SK-N-SH (cell line): ENCODE measurements at regions of chr11 and their contacts with region 1.

Region 1: DNA sequence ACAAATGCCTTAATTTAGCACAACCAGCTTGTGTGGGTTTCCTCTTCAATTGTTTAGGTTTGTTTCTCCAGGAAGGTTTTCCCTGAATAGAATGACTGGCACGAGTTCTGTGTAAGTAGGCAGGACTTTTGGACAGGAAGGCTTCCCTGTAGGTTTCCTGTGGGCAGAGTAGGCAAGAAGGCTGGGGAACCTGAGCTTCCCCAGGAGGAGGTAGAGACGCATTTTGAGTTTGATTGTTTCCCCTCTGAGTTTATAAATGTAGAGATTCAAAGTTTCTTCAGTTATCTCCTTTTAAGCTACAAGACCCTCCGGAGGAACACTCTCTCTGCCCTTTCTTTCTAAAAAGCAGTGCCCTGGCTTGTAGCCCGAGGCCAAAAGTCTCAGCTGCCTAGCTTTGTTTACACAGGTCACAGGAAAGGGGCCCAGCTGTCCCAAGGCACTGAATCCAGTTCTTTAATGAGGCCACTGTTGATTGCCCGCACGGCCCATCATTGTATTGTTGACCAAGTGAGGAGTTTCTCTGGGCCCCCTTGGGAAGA is 66.6 kb upstream of the RDX start:
- DNase-seq: no peak
- H3K4me3 ChIP-seq: no peak overlapping the region
- H3K27ac ChIP-seq: no peak overlapping the region
- H3K4me1 ChIP-seq: no peaks in the 10 kb centered on the region; a peak in 1 of 4 replicates
- H3K27me3 ChIP-seq: no peaks in the 10 kb centered on the region
- CTCF ChIP-seq: no peak
- EP300 ChIP-seq: no peak
- RAD21 ChIP-seq: no peak

Region 2: GRCh38 chr11:110092515-110093404 is 270.3 kb before region 1 on chr11 and contains the start of gene ZC3H12C:
- CTCF ChIA-PET with region 1: no interaction called
- POLR2A ChIA-PET with region 1: no interaction called
- DNase-seq: peak; percentile 90
- H3K4me3 ChIP-seq: peak within 1 kb of the TSS; percentile 78 to 79
- H3K27ac ChIP-seq: peak within 1 kb of the TSS; percentile 83 to 89
- H3K4me1 ChIP-seq: peaks cover 5 to 9% of the 10 kb centered on the region in 2 experiments; a peak in 3 of 4 replicates
- H3K27me3 ChIP-seq: no peaks in the 10 kb centered on the region
- CTCF ChIP-seq: peak; percentile 45
- EP300 ChIP-seq: no peak
- RAD21 ChIP-seq: peak; percentile 42
- polyA plus RNA-seq, gene ZC3H12C: 2.8 and 3.9 TPM in 2 replicates

Region 3: DNA sequence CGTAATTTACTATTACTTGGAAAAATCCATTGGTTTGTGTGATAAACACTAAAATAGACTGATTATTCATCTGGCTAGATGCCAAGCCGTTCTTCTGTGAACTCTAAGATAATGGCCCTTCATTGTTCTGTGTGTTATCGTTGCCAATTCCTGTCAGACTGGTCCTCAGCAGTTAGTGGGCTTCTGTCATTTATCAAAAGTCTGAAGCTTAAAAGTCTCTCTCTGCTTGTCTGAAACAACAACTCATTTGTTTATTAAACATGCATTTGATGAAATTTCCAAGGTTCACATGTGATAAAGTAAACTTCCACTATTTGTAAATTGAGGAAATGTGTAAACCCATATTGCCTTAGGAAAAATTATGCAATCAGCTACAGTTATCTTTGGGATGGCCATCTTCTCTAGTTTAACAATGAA is 45.5 kb before region 1 on chr11:
- CTCF ChIA-PET with region 1: no interaction called
- POLR2A ChIA-PET with region 1: no interaction called
- DNase-seq: peak; percentile 62
- H3K4me3 ChIP-seq: no peak overlapping the region
- H3K27ac ChIP-seq: peak overlapping the region in 1 of 2 experiments; percentile 48; a peak in 1 of 4 replicates
- H3K4me1 ChIP-seq: peaks cover 15 to 25% of the 10 kb centered on the region in 2 experiments; a peak in 3 of 4 replicates
- H3K27me3 ChIP-seq: no peaks in the 10 kb centered on the region
- CTCF ChIP-seq: no peak
- EP300 ChIP-seq: peak in 1 of 2 experiments; percentile 43; a peak in 2 of 4 replicates
- RAD21 ChIP-seq: no peak

Region 4: GRCh38 chr11:110349138-110349996 is 13.7 kb before region 1 on chr11:
- CTCF ChIA-PET with region 1: interaction called, 10 read pairs
- POLR2A ChIA-PET with region 1: no interaction called
- DNase-seq: no peak
- H3K4me3 ChIP-seq: no peak overlapping the region
- H3K27ac ChIP-seq: no peak overlapping the region
- H3K4me1 ChIP-seq: peaks cover 0 to 5% of the 10 kb centered on the region in 2 experiments; a peak in 1 of 4 replicates
- H3K27me3 ChIP-seq: no peaks in the 10 kb centered on the region
- CTCF ChIP-seq: no peak
- EP300 ChIP-seq: no peak
- RAD21 ChIP-seq: no peak